ENCODE measurements at regions of chr9 and their contacts with region 1.

Region 1: GRCh38 chr9:77163884-77164283 is 13.4 kb upstream of the VPS13A start:
- DNase-seq: no peak
- CTCF ChIP-seq: no peak

Region 2: GRCh38 chr9:77375956-77376532 is 212.2 kb after region 1 on chr9:
- in situ Hi-C with region 1: no loop called
- DNase-seq: no peak
- CTCF ChIP-seq: no peak

Region 3: DNA sequence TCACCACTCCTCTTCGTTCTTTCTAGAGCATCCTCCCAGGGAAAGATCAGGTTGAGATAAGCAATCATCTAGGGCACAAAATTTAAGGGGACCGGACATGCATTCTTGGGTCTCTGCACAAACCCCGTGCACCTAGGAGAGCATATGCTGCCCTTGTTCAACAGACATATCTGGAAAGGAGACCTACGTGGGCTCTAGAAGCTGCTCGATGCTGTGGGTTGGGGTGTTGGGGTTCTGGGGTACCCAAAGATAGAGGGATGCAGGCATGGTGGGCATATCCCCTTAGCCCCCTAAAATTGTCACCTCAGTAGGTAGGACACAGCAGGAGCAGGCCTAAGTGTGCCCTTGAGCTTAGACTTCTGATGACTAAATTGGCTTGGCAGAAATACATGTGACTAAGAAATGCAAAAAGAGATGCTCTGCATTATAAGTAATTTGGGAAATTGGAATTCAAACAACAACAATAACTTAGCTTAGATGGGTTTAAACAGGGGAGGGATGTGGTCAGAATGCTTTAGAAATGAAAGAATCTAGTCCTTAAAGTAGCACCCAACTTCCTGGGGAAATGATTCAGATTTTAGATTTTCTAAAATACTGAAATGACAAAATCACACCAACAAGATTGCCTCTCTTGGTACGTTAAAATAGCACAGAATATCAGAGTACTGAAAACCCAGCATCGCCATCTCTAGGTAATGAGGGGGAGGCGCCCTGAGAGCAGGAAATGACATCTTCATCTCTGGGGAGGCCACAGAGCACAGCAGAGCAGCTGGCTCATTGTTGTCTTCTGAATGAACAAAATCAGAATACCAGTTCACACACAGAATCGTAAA is 312.0 kb after region 1 on chr9:
- in situ Hi-C with region 1: loop called (anchors 25 kb)
- DNase-seq: peak; percentile 45
- CTCF ChIP-seq: no peak